CD8-positive, alpha-beta T cell (primary cell): ENCODE measurements at regions of chr3 and their contacts with region 1.

Region 1: DNA sequence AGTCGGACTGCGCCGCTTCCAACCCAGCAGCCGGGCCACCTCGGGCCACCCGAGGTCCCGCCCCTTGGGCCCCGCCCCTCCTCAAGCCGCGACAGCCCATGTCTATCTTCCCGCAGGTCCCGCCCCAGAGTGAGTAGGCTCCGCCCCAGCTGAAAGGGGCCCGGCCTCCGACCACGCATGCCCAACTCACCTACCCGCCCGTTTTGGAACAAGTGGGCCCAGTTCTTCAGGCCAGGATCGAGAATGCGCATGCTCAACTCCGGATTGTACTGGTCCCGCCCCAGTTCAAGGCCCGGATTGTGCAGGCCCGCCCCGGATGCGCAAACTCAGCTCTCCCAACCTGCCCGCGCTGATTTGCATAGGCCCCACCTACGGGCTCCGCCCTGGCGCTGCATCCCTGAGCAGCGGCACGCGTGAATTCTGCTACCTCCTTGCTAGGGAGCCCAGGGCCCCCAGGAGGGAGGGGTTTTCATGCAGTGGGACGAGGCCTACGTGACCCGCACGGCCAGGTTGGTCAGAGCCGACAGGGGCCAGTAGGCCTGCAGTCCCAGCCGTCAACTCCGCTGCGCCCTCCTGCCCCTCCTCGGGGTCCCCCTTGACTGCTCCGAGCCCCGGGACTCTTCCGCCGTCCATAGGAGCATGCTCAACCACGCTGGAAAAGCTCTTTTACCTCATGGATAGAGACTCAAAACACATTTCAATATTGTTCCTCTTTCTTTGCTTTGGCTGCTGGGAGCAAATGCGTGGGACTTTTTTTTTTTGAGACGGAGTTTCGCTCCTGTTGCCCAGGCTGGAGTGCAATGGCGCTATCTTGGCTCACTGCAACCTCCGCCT is at the start of gene PFKFB4:
- DNase-seq: peak; percentile 97 to 100 (median 99)
- ATAC-seq: peak; percentile 88
- H3K4me3 ChIP-seq: peak within 1 kb of the TSS; percentile 61 to 76
- H3K4me3 Mint-ChIP-seq: peak within 1 kb of the TSS; percentile 87
- H3K27ac ChIP-seq: peak within 1 kb of the TSS in 1 of 2 experiments; percentile 46
- H3K27ac Mint-ChIP-seq: peak within 1 kb of the TSS; percentile 81
- H3K4me1 ChIP-seq: peaks cover 7% of the 10 kb centered on the region
- H3K4me1 Mint-ChIP-seq: peaks cover 23% of the 10 kb centered on the region
- H3K27me3 ChIP-seq: no peaks in the 10 kb centered on the region
- H3K27me3 Mint-ChIP-seq: no peaks in the 10 kb centered on the region
- CTCF ChIP-seq: no peak
- total RNA-seq, gene PFKFB4: 1.2 to 1.3 TPM

Region 2: DNA sequence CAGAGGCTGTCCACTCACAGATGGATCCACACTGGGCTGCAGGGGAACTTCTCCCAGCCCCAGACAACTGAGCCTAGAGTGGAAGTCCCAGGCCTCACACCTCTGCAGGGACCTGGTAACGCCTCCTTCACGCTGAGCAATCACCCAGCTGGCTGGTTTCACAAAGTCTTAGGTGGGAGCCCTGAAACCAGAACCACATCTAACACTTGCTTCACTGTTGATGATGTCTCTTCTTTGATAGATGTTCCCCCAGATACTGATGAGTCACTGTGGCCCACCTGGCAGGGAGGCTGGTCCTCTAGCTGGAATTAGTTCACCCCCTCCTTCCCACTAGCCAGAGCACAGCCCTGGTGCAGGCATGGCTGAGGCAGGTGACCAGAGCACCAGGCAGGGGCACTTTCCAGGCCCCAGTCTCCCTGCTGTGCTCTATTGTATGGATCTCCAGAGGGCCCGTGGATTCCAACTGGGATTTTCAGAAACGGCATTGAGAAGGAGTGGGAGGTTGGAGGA is 1727.3 kb before region 1 on chr3:
- CTCF ChIA-PET with region 1: no interaction called
- POLR2A ChIA-PET with region 1: no interaction called
- intact Hi-C with region 1: no loop called
- DNase-seq: peak in 3 of 9 experiments; percentile 26 to 65 (median 56)
- ATAC-seq: peak; percentile 65
- H3K4me3 ChIP-seq: no peak overlapping the region
- H3K4me3 Mint-ChIP-seq: no peak overlapping the region
- H3K27ac ChIP-seq: no peak overlapping the region
- H3K27ac Mint-ChIP-seq: no peak overlapping the region
- H3K4me1 ChIP-seq: no peaks in the 10 kb centered on the region
- H3K4me1 Mint-ChIP-seq: no peaks in the 10 kb centered on the region
- H3K27me3 ChIP-seq: no peaks in the 10 kb centered on the region
- H3K27me3 Mint-ChIP-seq: no peaks in the 10 kb centered on the region
- CTCF ChIP-seq: no peak

Region 3: GRCh38 chr3:46976326-46977190 is 1580.5 kb before region 1 on chr3 and contains the start of gene CCDC12:
- CTCF ChIA-PET with region 1: no interaction called
- POLR2A ChIA-PET with region 1: no interaction called
- intact Hi-C with region 1: loop called in 1 of 2 experiments (anchors 5 kb)
- DNase-seq: peak; percentile 86 to 99 (median 93)
- ATAC-seq: peak; percentile 77
- H3K4me3 ChIP-seq: peak within 1 kb of the TSS; percentile 90 to 91
- H3K4me3 Mint-ChIP-seq: peak within 1 kb of the TSS; percentile 100
- H3K27ac ChIP-seq: peak within 1 kb of the TSS; percentile 75 to 94
- H3K27ac Mint-ChIP-seq: peak within 1 kb of the TSS; percentile 99
- H3K4me1 ChIP-seq: peaks cover 65% of the 10 kb centered on the region
- H3K4me1 Mint-ChIP-seq: peaks cover 69% of the 10 kb centered on the region
- H3K27me3 ChIP-seq: no peaks in the 10 kb centered on the region
- H3K27me3 Mint-ChIP-seq: no peaks in the 10 kb centered on the region
- CTCF ChIP-seq: no peak
- total RNA-seq, gene CCDC12: 99.9 to 107 TPM

Region 4: GRCh38 chr3:47856669-47857068 is 700.3 kb before region 1 on chr3:
- CTCF ChIA-PET with region 1: no interaction called
- POLR2A ChIA-PET with region 1: no interaction called
- intact Hi-C with region 1: no loop called
- DNase-seq: no peak
- ATAC-seq: no peak
- H3K4me3 ChIP-seq: no peak overlapping the region
- H3K4me3 Mint-ChIP-seq: no peak overlapping the region
- H3K27ac ChIP-seq: no peak overlapping the region
- H3K27ac Mint-ChIP-seq: no peak overlapping the region
- H3K4me1 ChIP-seq: no peaks in the 10 kb centered on the region
- H3K4me1 Mint-ChIP-seq: no peaks in the 10 kb centered on the region
- H3K27me3 ChIP-seq: no peaks in the 10 kb centered on the region
- H3K27me3 Mint-ChIP-seq: no peaks in the 10 kb centered on the region
- CTCF ChIP-seq: no peak

Region 5: DNA sequence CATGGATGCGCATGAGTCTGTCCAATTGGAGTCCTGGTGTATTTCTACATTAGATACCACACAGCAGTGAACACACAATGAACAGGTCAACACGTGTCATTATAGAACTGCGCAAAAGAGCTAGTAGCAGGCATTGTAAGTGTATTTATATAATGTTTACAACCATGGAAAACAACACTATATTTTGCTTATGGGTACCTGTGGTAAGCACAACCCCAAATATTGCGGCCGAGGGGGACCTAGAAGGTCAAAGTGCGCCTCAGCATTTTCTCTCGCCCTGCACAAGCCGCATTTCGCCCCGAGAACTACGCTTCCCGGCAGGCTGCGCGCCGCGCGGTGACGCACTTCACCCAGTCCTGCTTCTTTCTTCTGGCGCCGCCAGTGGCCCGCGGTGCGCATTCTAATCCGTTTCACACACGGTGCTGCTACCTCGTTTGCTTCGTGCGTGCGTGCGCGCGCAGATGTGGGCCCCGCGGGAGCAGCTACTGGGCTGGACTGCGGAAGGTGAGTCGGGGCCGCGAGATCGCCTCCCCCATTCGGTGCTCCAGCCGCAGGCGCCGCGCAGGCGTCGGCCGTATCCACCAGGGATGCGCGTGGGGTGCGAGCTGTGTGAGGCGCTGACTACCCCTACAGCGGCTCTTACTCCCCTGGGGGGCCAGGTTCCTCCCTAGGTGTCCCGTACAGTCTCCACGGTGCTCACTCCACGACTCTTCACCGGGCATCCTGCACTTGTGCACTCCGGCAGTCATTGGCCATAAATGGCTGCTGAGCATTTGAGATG is 316.1 kb before region 1 on chr3 and contains the start of gene ZNF589:
- CTCF ChIA-PET with region 1: interaction called, 8 read pairs
- POLR2A ChIA-PET with region 1: interaction called, 4 read pairs
- intact Hi-C with region 1: loop called in 1 of 2 experiments (anchors 1 kb)
- DNase-seq: peak; percentile 91 to 97 (median 94)
- ATAC-seq: peak; percentile 97
- H3K4me3 ChIP-seq: peak within 1 kb of the TSS; percentile 66 to 90
- H3K4me3 Mint-ChIP-seq: peak within 1 kb of the TSS; percentile 92
- H3K27ac ChIP-seq: peak within 1 kb of the TSS; percentile 62 to 85
- H3K27ac Mint-ChIP-seq: peak within 1 kb of the TSS; percentile 93
- H3K4me1 ChIP-seq: peaks cover 23% of the 10 kb centered on the region
- H3K4me1 Mint-ChIP-seq: peaks cover 28% of the 10 kb centered on the region
- H3K27me3 ChIP-seq: no peaks in the 10 kb centered on the region
- H3K27me3 Mint-ChIP-seq: no peaks in the 10 kb centered on the region
- CTCF ChIP-seq: peak; percentile 31
- total RNA-seq, gene ZNF589: 18.9 to 20.9 TPM

Region 6: GRCh38 chr3:48400824-48401433 is 156.1 kb before region 1 on chr3:
- CTCF ChIA-PET with region 1: interaction called, 64 read pairs
- POLR2A ChIA-PET with region 1: interaction called, 11 read pairs
- intact Hi-C with region 1: no loop called
- DNase-seq: peak; percentile 29 to 87 (median 64)
- ATAC-seq: peak; percentile 90
- H3K4me3 ChIP-seq: no peak overlapping the region
- H3K4me3 Mint-ChIP-seq: no peak overlapping the region
- H3K27ac ChIP-seq: no peak overlapping the region
- H3K27ac Mint-ChIP-seq: no peak overlapping the region
- H3K4me1 ChIP-seq: no peaks in the 10 kb centered on the region
- H3K4me1 Mint-ChIP-seq: no peaks in the 10 kb centered on the region
- H3K27me3 ChIP-seq: no peaks in the 10 kb centered on the region
- H3K27me3 Mint-ChIP-seq: peaks cover 3% of the 10 kb centered on the region
- CTCF ChIP-seq: peak; percentile 87

Region 7: DNA sequence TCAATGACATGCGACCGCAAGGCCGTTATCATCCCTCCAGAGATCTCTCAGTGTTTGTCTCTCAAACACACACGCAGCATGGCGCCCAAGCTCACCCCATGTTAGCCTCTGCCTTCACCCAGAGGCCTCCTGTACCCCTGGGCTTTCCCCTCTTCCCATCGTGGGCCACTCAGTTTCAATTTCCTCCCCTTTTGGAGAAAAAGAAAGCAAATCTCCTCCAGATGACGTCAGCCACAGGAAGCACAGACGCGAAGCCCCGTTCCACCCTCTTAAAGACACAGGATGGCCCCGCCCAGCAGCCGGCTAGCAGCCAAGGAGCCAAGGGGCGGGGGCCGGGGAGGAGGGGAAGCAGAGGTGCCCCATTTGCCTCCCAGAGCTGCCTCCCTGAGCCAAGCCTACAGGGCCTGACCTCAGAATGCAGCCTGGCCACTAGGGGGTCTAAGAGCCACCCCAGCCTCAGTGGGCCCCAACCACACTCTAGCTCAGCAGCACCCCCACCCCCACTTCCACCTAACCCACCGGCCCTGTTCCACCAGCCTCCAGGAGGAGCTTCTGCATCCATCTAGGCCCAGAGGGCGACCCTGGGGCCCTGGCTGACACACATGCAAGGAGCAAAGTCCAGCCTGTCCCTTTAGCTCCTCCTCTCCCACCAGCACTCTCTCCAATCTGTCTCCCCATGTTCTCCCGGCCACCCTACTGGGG is 83.9 kb before region 1 on chr3:
- CTCF ChIA-PET with region 1: interaction called, 3 read pairs
- POLR2A ChIA-PET with region 1: no interaction called
- intact Hi-C with region 1: loop called in 1 of 2 experiments (anchors 1 kb)
- DNase-seq: peak; percentile 85 to 99 (median 92)
- ATAC-seq: peak; percentile 87
- H3K4me3 ChIP-seq: peak overlapping the region; percentile 62 to 65
- H3K4me3 Mint-ChIP-seq: peak overlapping the region; percentile 90
- H3K27ac ChIP-seq: peak overlapping the region; percentile 82 to 92
- H3K27ac Mint-ChIP-seq: peak overlapping the region; percentile 99
- H3K4me1 ChIP-seq: peaks cover 55% of the 10 kb centered on the region
- H3K4me1 Mint-ChIP-seq: peaks cover 56% of the 10 kb centered on the region
- H3K27me3 ChIP-seq: no peaks in the 10 kb centered on the region
- H3K27me3 Mint-ChIP-seq: no peaks in the 10 kb centered on the region
- CTCF ChIP-seq: no peak

Region 8: DNA sequence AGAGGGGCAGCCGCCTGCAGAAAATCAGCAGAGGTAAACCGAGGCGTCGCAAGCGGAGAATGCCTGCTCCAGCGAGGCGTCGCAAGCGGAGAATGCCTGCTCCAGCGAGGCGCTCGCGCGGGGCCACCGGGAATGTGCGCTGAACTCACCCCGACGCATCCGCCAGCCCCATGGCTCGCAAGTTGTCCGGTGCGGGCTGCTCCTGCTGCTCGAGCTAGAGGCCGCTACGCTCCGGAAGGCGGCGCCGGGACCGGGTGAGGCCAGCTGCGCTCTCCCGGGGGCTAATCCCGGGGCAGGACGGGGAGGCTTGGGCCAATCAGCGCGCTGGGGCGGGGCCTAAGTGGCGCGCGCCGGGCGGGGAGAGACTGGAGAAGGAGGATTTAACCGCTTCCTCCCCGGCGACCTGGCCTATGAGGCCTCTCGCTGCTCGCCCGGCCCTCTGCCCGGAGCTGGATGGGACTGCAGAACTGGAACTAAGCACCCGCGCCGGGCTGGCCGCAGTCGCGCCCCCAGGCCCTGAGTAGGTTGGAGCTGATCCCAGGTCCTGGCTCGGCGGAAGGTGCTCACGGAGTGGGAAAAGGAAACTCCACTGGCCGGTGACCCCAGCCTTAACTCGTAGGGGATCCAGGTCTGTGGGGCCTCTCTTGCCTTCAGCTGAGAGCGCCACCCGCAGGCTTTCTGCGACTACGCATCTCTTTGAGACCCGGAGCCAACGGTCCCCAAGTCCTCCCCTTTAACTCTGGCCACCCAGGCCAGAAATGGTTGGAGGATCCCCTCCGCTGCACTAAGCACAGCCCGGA is 78.4 kb after region 1 on chr3 and contains the start of gene SLC26A6:
- CTCF ChIA-PET with region 1: no interaction called
- POLR2A ChIA-PET with region 1: no interaction called
- intact Hi-C with region 1: loop called in 1 of 2 experiments (anchors 2 kb)
- DNase-seq: peak; percentile 79 to 96 (median 93)
- ATAC-seq: peak; percentile 98
- H3K4me3 ChIP-seq: peak within 1 kb of the TSS; percentile 78 to 93
- H3K4me3 Mint-ChIP-seq: peak within 1 kb of the TSS; percentile 87
- H3K27ac ChIP-seq: peak within 1 kb of the TSS; percentile 34 to 64
- H3K27ac Mint-ChIP-seq: no peak within 1 kb of the TSS
- H3K4me1 ChIP-seq: peaks cover 17% of the 10 kb centered on the region
- H3K4me1 Mint-ChIP-seq: peaks cover 17% of the 10 kb centered on the region
- H3K27me3 ChIP-seq: no peaks in the 10 kb centered on the region
- H3K27me3 Mint-ChIP-seq: no peaks in the 10 kb centered on the region
- CTCF ChIP-seq: no peak
- total RNA-seq, gene SLC26A6: 10.9 to 13.5 TPM

Region 9: DNA sequence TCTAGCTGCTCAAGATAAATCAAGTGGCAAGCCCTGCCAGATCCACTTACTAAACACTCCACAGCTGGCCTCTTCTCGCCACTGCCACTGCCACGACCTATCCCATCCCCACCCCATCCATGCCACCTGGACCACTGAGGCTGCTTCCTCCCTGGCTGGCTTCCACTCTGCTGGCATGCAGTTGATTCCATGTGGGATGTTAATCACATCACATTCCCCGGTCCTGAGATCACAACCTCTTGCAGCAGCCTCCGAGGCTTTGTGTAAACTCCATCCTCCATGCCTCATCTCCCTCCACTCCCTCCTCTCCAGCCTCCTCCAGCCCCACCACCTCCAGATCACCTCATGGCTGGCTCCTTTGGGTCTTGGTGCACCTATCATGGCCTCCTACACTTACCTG is 121.0 kb after region 1 on chr3:
- CTCF ChIA-PET with region 1: no interaction called
- POLR2A ChIA-PET with region 1: no interaction called
- intact Hi-C with region 1: no loop called
- DNase-seq: no peak
- ATAC-seq: no peak
- H3K4me3 ChIP-seq: no peak overlapping the region
- H3K4me3 Mint-ChIP-seq: no peak overlapping the region
- H3K27ac ChIP-seq: no peak overlapping the region
- H3K27ac Mint-ChIP-seq: no peak overlapping the region
- H3K4me1 ChIP-seq: no peaks in the 10 kb centered on the region
- H3K4me1 Mint-ChIP-seq: peaks cover 1% of the 10 kb centered on the region
- H3K27me3 ChIP-seq: no peaks in the 10 kb centered on the region
- H3K27me3 Mint-ChIP-seq: no peaks in the 10 kb centered on the region
- CTCF ChIP-seq: no peak

Region 10: DNA sequence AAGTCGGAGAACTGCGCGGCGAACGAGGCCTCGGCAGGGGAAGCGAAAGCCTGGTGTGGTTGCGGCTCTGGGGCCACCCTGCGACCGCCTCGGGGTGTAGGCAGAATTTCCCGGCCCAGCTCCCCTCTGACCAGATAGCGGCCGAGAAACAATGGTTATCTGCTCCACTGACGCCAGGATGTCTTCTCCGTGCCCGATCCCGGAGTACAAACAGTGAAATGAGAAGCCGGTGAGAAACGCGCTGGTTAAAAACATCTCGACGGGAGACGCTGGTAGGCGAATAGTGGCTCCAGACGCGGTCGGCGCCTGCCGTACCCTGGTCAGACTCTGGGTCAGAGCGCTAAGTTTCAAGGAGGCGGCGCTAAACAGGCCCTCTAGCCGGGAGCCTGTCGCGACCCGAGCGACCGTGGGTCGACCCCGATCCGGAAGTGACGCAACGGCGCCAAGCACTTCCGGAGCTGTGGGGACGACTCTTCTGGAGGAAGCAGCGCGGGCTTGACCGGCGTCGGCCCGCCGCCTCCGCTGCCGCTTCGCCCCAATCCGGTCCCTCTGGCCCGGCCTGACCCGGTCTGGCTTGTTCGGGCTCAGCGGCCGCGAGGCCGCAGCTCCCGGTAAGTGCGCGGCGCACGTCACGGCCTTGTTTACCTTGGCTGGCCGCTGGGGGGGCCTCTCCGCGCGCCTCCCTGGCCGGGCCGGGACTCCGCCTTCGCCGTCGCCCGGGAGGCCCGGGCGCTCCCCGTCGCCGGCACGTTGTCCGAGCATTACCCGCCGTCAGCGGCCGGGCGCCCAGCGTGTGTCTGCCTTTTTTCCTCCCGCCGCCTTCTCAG is 361.6 kb after region 1 on chr3 and contains the start of gene ARIH2:
- CTCF ChIA-PET with region 1: no interaction called
- POLR2A ChIA-PET with region 1: no interaction called
- intact Hi-C with region 1: loop called in 1 of 2 experiments (anchors 2 kb)
- DNase-seq: peak; percentile 74 to 95 (median 88)
- ATAC-seq: peak; percentile 72
- H3K4me3 ChIP-seq: peak within 1 kb of the TSS; percentile 92 to 93
- H3K4me3 Mint-ChIP-seq: peak within 1 kb of the TSS; percentile 98
- H3K27ac ChIP-seq: peak within 1 kb of the TSS; percentile 99
- H3K27ac Mint-ChIP-seq: peak within 1 kb of the TSS; percentile 99
- H3K4me1 ChIP-seq: peaks cover 22% of the 10 kb centered on the region
- H3K4me1 Mint-ChIP-seq: peaks cover 27% of the 10 kb centered on the region
- H3K27me3 ChIP-seq: no peaks in the 10 kb centered on the region
- H3K27me3 Mint-ChIP-seq: no peaks in the 10 kb centered on the region
- CTCF ChIP-seq: peak; percentile 24
- total RNA-seq, gene ARIH2: 225 to 242 TPM

Region 11: GRCh38 chr3:50550079-50550741 is 1993.2 kb after region 1 on chr3:
- CTCF ChIA-PET with region 1: no interaction called
- POLR2A ChIA-PET with region 1: no interaction called
- intact Hi-C with region 1: no loop called
- DNase-seq: peak; percentile 43 to 75 (median 71)
- ATAC-seq: peak; percentile 89
- H3K4me3 ChIP-seq: no peak overlapping the region
- H3K4me3 Mint-ChIP-seq: no peak overlapping the region
- H3K27ac ChIP-seq: no peak overlapping the region
- H3K27ac Mint-ChIP-seq: no peak overlapping the region
- H3K4me1 ChIP-seq: no peaks in the 10 kb centered on the region
- H3K4me1 Mint-ChIP-seq: no peaks in the 10 kb centered on the region
- H3K27me3 ChIP-seq: no peaks in the 10 kb centered on the region
- H3K27me3 Mint-ChIP-seq: no peaks in the 10 kb centered on the region
- CTCF ChIP-seq: peak; percentile 82